ENCODE measurements at regions of chr10 and their contacts with region 1.

Region 1: DNA sequence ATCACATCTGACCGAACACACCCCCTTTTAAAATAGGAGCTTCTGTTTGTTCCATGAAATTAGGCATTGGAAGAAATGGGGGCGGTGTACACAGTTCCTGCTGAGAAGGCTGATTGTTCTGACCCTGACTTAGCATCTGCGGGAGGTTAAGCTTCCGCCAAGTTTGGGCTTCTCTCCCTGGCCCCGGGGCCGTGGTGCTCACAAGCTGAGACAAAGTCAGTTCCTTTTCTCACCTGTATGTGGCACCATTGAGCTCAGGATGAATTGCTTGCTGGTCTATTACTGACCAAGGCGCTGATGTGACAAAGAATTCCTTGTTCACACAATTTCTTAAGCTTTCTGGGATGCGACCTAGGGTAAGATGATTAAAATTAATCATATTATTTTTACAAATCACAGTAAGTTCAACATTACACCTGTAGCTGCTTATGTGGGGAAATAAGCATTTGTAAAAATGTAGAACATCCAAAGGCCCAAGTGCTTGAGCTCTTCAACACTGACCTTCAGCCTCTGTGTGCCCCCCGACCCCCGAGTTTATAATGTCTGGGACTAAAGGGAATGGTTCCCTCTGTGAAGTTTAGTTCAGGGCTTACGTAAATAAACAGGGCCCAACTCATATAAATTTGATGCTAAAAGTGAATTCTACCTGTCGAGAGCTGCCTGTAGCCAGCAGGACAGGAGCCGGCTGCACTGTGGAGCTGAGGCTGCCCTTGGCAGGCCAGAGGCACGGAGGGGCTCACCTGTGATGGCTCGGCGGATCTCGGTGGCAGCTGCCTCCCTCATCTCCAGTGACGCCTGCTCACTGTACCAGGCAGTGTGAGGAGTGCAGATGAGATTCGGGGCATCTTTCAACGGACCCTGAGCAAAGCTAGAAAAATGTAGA is 50.8 kb downstream of the ZRANB1 start:
- DNase-seq: peak; percentile 59
- H3K4me3 ChIP-seq: no peak overlapping the region
- H3K27ac ChIP-seq: peak overlapping the region; percentile 2 to 14; a peak in 2 of 4 replicates
- H3K4me1 ChIP-seq: no peaks in the 10 kb centered on the region; a peak in 1 of 4 replicates
- H3K27me3 ChIP-seq: no peaks in the 10 kb centered on the region
- CTCF ChIP-seq: peak; percentile 75
- EP300 ChIP-seq: no peak
- RAD21 ChIP-seq: peak; percentile 72

Region 2: DNA sequence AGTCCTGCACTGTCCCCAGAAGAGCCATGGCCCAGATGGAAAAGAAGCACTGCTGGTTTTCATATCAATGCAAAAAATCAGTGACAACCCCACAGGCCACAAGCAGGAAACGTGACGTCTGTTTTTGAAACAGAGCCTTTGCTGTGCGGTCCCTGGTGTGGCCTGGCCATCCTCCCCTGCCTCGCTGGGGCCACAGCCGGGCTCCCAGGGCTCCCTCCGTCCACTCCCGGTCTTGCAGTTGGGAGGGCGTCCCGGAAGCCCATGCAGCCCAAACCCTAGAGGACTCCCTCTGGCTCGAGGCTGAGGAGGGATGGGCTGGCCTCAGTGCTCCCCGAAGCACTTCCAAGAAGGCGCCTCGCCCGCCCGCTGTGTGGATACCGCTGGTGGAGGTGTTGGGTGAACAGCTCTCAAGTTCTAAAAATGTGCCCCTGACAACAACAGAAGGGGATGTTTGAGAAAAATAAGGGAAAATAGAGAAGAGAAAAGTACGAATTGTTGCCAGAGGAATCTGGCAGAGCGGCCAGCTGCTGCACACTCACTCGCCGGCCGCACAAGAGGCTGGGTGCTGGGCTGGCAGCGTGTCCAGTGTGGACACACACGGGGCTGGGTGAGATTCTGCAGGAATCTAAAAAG is 22.7 kb after region 1 on chr10:
- CTCF ChIA-PET with region 1: interaction called, 14 read pairs
- POLR2A ChIA-PET with region 1: interaction called, 3 read pairs
- DNase-seq: peak; percentile 88
- H3K4me3 ChIP-seq: no peak overlapping the region
- H3K27ac ChIP-seq: peak overlapping the region in 1 of 2 experiments; percentile 97; a peak in 2 of 4 replicates
- H3K4me1 ChIP-seq: peaks cover 6 to 80% of the 10 kb centered on the region in 2 experiments; a peak in 2 of 4 replicates
- H3K27me3 ChIP-seq: no peaks in the 10 kb centered on the region
- CTCF ChIP-seq: no peak
- EP300 ChIP-seq: peak in 1 of 2 experiments; percentile 86; a peak in 2 of 4 replicates
- RAD21 ChIP-seq: peak; percentile 40; the same call in 1 of the 2 replicates

Region 3: GRCh38 chr10:125038637-125039036 is 45.9 kb after region 1 on chr10:
- CTCF ChIA-PET with region 1: interaction called, 21 read pairs
- POLR2A ChIA-PET with region 1: no interaction called
- DNase-seq: no peak
- H3K4me3 ChIP-seq: no peak overlapping the region
- H3K27ac ChIP-seq: peak overlapping the region in 1 of 2 experiments; percentile 13; a peak in 1 of 4 replicates
- H3K4me1 ChIP-seq: peaks cover 56 to 66% of the 10 kb centered on the region in 2 experiments
- H3K27me3 ChIP-seq: no peaks in the 10 kb centered on the region
- CTCF ChIP-seq: 0 out of 2 replicates have a peak, but pooled peaks have one; percentile 12
- EP300 ChIP-seq: no peak
- RAD21 ChIP-seq: peak; percentile 47

Measured in SK-N-SH (cell line).